Dorsolateral prefrontal cortex (tissue), 120 donors: ENCODE measurements at regions of chr12 and their contacts with region 1.

Region 1: GRCh38 chr12:105053116-105053572 is 31.1 kb downstream of the ALDH1L2 start:
- DNase-seq: peak; percentile 51 to 90 (median 62)
- H3K4me3 ChIP-seq: no peak overlapping the region
- H3K27ac ChIP-seq: no peak overlapping the region
- H3K27me3 ChIP-seq: no peaks in the 10 kb centered on the region
- CTCF ChIP-seq: peak; percentile 81 to 99 (median 94)

Region 2: DNA sequence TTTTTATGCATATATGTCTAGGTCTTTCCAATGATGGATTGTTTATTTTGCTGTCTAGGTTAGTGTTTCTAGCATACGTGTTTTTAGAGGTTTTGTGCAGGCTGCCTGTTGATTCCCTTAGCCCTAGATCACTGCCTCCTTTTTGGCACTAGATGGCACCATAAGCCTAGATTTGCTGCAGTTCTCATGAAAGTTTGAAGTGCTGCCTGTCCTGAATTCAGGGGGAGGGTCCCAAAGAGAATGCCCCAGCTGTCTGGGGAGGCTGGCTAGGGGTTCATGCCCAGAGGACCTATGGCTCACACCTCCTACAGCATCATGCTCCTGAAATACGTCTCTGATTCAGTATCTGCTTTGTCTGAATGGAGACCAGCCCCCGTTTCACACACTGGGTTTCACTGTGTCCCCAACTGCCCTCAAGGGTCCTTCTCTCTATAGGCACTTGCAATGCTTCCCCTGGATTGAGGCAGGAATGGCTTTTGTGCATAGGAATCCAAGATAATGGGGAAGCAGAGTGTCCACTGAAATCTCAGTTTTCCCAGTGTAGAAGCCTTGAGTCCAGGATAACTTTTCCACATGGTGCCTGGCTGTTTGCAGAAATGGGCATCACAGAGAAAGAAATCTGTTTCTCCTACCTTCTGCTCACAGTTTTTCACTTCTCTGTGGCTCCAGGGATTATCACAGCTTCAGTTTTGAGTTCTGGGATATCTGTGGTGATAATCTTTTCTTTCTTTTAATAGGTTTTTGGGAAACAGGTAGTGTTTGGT is 851.7 kb before region 1 on chr12:
- intact Hi-C with region 1: loop called in 1 of 2 experiments (anchors 10 kb)
- DNase-seq: peak in 2 of 10 donors; percentile 24 to 28
- H3K4me3 ChIP-seq: no peak overlapping the region
- H3K27ac ChIP-seq: no peak overlapping the region
- H3K27me3 ChIP-seq: no peaks in the 10 kb centered on the region
- CTCF ChIP-seq: peak in 55 of 56 donors; percentile 45 to 92 (median 74)

Region 3: GRCh38 chr12:104671407-104672098 is 381.6 kb before region 1 on chr12:
- intact Hi-C with region 1: loop called in 1 of 2 experiments (anchors 10 kb)
- DNase-seq: peak in 7 of 10 donors; percentile 23 to 73 (median 60)
- H3K4me3 ChIP-seq: no peak overlapping the region
- H3K27ac ChIP-seq: peak overlapping the region in 47 of 59 donors; percentile 7 to 98 (median 66)
- H3K27me3 ChIP-seq: no peaks in the 10 kb centered on the region
- CTCF ChIP-seq: no peak